AG04450 (cell line): ENCODE measurements at regions of chr10 and their contacts with region 1.

Region 1: GRCh38 chr10:47047671-47048525 is 136.7 kb downstream of the PTPN20 start:
- DNase-seq: peak; percentile 59
- H3K4me3 ChIP-seq: no peak overlapping the region
- H3K27ac ChIP-seq: no peak overlapping the region
- H3K27me3 ChIP-seq: no peaks in the 10 kb centered on the region
- CTCF ChIP-seq: peak; percentile 90

Region 2: DNA sequence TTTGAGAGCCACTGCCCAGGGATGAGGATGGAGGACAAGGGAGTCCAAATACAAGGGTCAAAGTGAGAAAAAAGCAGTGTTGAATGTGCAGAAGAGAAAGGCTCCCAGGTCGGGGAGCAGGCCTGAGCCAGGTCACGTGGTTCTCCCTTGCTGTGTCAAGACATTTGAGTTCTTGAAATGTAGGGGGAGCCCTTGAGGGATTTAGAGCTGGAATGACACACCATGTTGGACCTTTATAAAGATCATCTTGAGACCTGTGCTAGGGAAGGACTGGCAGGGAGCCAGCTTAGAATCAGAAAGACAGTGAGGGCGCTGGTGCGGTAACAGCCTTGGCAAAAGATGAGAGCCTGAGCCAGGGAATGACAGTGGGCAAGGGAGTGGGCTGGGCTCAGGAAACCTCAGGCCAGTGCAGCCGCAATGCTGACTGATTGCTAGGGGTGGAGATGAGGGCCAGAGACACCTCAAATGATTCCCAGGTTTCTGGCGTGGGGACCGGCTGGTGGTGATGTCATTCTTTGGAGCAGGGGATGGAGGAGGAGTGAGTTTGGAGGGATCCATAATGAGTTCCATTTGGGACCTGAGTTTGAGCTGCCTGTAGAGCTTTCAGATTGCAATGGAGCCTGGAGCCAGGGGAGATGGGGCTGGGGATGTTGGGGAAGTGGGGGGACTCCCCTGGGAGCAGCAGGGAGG is 16.5 kb before region 1 on chr10:
- CTCF ChIA-PET with region 1: interaction called, 35 read pairs
- POLR2A ChIA-PET with region 1: no interaction called
- DNase-seq: no peak
- H3K4me3 ChIP-seq: no peak overlapping the region
- H3K27ac ChIP-seq: no peak overlapping the region
- H3K27me3 ChIP-seq: peaks cover 3% of the 10 kb centered on the region
- CTCF ChIP-seq: no peak

Region 3: DNA sequence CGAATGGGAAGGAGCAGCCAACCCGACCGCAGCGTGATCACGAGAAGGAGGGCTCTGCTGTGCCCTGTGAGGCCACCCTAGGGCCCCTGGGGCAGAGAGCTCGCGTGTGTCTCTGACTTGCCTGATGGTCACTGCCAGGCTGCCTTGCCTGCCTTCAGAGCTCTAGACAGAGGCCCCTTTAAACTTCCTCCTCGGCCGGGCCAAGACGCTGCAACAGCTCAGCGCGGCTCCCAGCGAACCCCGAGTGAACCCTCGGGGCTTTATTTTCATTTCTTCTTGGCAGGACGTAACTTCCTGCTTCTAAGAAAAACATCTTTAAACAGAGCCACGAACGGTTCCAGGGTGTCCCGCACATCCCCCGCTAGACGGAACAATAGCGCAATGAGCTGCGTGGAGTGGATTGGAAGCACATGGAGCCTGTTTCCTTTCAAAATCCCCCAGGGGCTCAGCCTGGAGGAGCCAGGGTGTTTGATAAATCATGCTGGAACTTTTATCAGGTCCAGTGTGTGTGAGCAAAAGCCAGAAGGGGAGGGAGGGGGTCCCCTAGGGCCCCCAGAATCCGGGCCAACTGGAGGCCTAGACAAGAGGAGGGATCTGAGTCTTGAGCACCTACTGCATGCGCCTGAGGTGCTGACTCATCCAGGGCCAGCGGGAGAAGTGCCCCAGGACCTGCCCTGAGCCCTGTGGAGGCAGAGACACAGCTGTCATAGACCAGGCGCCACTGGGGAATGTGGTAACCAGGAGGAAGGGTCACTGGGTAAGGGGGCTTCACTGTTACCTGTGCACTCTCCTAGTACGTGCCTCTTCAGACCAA is 118.0 kb after region 1 on chr10:
- CTCF ChIA-PET with region 1: interaction called, 10 read pairs
- POLR2A ChIA-PET with region 1: no interaction called
- DNase-seq: peak; percentile 45
- H3K4me3 ChIP-seq: peak overlapping the region; percentile 3
- H3K27ac ChIP-seq: peak overlapping the region; percentile 96
- H3K27me3 ChIP-seq: no peaks in the 10 kb centered on the region
- CTCF ChIP-seq: no peak

Region 4: DNA sequence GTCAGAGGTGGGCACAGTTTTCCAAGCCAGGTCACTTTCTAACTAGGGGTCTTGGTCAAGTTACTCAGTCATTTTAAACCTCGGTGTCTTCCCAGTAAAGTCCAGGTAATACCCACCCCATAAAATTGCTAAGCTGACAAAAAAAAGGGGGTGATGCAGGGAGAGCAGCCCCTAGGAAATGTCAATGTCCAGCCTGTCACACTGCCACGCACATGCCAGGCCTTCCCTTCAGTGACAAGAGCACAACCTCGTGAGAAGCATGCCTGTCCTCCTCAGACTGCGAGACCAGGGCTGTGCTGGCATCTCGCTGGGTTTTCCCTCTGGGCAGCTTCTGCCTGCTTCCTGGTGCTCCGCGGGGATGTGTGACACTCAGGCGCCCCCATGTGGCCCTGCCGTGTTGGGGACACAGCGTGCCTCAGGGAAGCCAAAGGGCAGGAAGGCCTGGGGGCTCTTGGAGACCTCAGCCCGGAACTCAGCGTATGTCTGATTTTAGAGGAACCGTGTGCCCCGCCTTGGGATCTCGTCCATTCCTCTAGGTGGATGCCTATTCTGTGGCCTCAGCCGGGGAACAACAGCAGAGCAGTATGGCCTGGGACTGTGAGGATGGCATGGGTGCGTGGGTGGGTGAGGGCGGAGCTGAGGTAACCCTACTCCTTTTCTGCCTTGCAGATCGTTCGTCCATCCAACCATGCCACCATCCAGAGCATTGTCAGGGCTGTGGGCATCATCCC is 264.2 kb after region 1 on chr10:
- CTCF ChIA-PET with region 1: interaction called, 167 read pairs
- POLR2A ChIA-PET with region 1: interaction called, 3 read pairs
- DNase-seq: peak; percentile 43
- H3K4me3 ChIP-seq: no peak overlapping the region
- H3K27ac ChIP-seq: no peak overlapping the region
- H3K27me3 ChIP-seq: peaks cover 13% of the 10 kb centered on the region
- CTCF ChIP-seq: peak; percentile 96

Region 5: DNA sequence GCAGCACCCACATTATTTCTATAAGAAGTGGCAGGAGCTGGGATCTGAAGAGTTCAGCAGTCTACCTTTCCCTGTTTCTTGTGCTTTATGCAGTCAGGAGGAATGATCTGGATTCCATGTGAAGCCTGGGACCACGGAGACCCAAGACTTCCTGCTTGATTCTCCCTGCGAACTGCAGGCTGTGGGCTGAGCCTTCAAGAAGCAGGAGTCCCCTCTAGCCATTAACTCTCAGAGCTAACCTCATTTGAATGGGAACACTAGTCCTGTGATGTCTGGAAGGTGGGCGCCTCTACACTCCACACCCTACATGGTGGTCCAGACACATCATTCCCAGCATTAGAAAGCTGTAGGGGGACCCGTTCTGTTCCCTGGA is 299.4 kb after region 1 on chr10:
- CTCF ChIA-PET with region 1: no interaction called
- POLR2A ChIA-PET with region 1: no interaction called
- DNase-seq: no peak
- H3K4me3 ChIP-seq: no peak overlapping the region
- H3K27ac ChIP-seq: no peak overlapping the region
- H3K27me3 ChIP-seq: peaks cover 21% of the 10 kb centered on the region
- CTCF ChIP-seq: no peak